Dendritic cell treated with granulocyte-macrophage colony-stimulating factor and Interleukin-4, amounts not matched to agents 40 ng/mL and 50 ng/mL, for 4 days (primary cell): ENCODE measurements at regions of chr6 and their contacts with region 1.

Region 1: DNA sequence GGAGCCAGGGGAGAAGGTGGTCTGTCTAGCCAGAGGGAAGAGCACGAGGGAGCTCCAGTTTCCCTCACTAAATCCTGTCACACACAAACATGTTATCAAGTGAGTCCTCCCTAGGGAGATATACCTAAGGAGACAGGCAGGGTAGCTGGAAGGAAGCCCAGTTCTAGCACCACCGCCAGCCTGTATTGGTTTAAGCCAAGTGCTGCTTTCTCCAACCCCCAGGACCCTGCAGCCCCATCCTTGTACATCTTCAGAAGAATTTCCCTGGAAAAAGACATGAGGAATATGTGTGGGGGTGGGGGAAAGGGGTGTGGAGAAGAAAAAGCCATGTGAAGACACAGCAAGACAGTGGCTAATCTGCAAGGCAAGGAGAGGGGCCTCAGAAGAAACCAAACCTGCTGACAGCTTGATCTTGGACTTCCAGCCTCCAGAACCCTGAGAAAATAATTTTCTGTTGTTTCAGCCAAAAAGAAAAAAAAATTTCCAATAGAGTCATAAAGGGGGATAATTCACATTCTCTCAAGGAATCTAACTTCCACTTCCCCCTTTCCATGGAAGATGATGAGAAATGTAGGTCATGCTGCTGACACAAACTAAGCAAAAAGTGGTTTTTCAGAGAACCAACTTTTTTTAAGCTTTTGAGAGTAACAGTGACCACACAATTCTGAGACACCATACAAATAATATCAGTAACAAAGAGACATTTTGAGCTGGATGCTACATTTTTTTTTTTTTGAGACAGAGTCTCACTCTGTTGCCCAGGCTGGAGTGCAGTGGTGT is 103.2 kb upstream of the PRDM1 start:
- H3K4me3 Mint-ChIP-seq: peak overlapping the region; percentile 34
- H3K27ac Mint-ChIP-seq: peak overlapping the region; percentile 95
- H3K4me1 Mint-ChIP-seq: peaks cover 84% of the 10 kb centered on the region
- H3K27me3 Mint-ChIP-seq: peaks cover 28% of the 10 kb centered on the region

Region 2: GRCh38 chr6:105872246-105872645 is 110.7 kb before region 1 on chr6:
- intact Hi-C with region 1: loop called (anchors 1 kb)
- H3K4me3 Mint-ChIP-seq: no peak overlapping the region
- H3K27ac Mint-ChIP-seq: peak overlapping the region; percentile 72
- H3K4me1 Mint-ChIP-seq: peaks cover 77% of the 10 kb centered on the region
- H3K27me3 Mint-ChIP-seq: peaks cover 3% of the 10 kb centered on the region

Region 3: GRCh38 chr6:105880030-105880492 is 102.9 kb before region 1 on chr6:
- intact Hi-C with region 1: loop called (anchors 1 kb)
- H3K4me3 Mint-ChIP-seq: peak overlapping the region; percentile 52
- H3K27ac Mint-ChIP-seq: peak overlapping the region; percentile 91
- H3K4me1 Mint-ChIP-seq: peaks cover 89% of the 10 kb centered on the region
- H3K27me3 Mint-ChIP-seq: peaks cover 3% of the 10 kb centered on the region

Region 4: DNA sequence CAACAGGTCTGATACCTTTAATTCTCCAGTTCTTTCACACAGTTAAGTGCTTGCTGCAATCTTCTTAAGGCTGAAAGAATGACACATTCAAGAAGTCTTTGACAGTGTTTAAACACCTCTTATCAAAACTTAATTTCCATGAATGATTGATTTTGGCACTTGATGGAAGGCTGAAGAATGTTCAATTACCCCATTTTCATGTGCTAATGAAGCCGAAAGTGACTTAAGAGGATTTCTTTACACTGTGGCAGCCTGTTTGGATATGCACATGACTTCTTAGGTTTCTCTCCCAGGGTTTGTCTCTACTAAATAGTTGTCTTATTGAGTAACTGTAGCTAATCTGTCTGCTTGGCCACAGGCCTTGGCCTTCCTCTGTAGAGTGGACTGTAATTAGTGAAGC is 22.1 kb after region 1 on chr6:
- intact Hi-C with region 1: no loop called
- H3K4me3 Mint-ChIP-seq: no peak overlapping the region
- H3K27ac Mint-ChIP-seq: no peak overlapping the region
- H3K4me1 Mint-ChIP-seq: peaks cover 6% of the 10 kb centered on the region
- H3K27me3 Mint-ChIP-seq: peaks cover 13% of the 10 kb centered on the region